Right ventricle myocardium inferior (tissue), 1 donor: ENCODE measurements at regions of chr12 and their contacts with region 1.

Region 1: DNA sequence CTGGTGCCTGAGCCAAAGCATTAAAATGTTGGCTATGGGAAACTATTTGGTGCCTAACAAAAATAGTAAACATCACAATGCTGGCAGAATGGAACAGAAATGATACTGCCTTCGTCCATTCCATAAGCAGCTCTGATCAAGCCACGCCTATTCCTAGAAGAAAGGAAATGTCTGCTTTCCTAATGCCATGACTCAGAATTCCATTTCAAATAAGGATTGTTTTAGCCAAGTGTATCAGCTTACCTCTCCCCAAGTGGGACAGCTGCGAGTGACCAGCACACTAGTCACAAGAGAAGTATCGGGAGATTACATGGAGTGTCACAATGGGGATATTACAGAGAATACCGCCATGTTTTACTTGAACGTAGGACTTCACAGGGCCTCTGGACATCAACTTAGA is 38.7 kb downstream of the GLT8D2 start:
- DNase-seq: no peak
- ATAC-seq: no peak

Region 2: GRCh38 chr12:104049903-104050356 is 38.7 kb after region 1 on chr12 and contains the start of gene GLT8D2:
- intact Hi-C with region 1: loop called (anchors 5 kb)
- DNase-seq: peak; percentile 69
- ATAC-seq: peak; percentile 86
- total RNA-seq, gene GLT8D2: 8.8 TPM

Region 3: DNA sequence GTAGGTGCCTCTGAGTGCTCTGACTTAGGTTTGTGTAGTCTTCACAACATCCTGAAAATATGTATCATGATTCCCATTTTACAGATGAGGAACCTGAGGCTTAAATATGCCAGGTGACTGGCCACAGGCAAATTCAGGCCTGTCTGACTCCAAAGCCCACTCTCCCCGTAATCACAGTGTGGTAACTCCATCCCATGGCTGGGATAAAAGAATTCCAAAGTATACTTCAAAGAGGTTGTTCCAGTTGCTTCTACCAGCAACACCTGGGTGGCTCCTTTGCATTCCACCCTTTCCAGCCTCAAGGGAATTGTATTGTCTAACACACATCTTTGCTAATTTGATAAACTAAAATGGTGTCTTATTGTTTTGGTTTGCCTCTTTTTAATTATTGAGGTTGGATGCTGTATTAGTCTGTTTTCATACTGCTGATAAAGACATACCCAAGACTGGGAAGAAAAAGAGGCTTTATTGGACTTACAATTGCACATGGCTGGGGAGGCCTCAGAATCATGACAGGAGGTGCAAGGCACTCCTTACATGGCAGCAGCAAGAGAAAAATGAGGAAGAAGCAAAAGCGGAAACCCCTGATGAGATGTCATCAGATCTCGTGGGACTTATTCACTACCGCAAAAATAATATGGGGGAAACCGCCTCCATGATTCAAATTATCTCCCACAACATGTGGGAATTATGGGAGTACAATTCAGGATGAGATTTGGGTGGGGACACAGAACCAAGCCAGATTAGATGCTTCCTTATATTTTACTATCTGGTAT is 435.6 kb after region 1 on chr12:
- intact Hi-C with region 1: no loop called
- DNase-seq: no peak
- ATAC-seq: no peak